ENCODE measurements at regions of chr5 and their contacts with region 1.

Region 1: DNA sequence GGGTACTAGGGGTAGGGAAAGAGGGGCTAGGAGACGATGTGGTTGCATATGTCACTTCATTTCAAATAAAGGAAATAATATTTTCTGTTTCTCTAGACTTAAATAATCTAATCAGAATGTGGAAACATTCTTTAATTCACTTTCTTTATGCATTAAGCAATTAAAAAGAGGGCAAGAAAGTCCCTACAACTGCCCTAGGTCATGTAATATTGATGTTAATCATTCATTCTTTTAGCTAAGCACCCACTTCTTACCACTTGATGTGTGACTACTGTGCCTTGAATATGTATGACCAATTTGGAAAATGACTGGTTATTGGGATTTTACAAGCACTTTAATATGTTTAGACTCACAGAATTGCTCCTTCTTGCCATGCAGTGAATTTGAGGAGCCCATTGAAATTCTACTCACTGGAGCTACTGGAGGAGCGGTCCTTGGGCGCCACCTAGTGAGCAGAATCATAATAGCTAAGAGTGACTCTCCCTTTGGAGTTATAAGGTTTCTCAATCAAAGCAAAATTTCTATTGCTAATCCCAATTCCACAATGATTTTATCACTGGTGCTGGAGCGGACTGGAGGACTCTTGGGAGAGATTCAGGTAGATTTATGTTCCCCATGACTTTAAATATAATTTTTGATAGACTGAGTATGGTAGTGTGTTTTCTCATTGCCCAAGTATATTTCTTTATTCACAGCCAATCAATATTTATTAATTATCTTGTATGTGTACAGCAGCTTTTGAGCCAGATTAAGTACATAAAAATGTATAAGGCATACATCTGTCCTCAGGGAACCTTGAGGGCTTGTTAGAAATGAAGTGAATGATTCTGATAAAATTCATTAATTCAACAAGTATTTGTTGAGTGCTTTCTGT is 225.1 kb downstream of the ADGRV1 start:
- DNase-seq: peak; percentile 25
- ATAC-seq: peak; percentile 92
- H3K4me3 ChIP-seq: no peak overlapping the region
- H3K27ac ChIP-seq: no peak overlapping the region
- H3K4me1 ChIP-seq: no peaks in the 10 kb centered on the region
- H3K27me3 ChIP-seq: no peaks in the 10 kb centered on the region
- CTCF ChIP-seq: peak; percentile 81 to 91 (median 83)
- EP300 ChIP-seq: no peak
- POLR2A ChIP-seq: no peak
- RAD21 ChIP-seq: peak; percentile 97

Region 2: DNA sequence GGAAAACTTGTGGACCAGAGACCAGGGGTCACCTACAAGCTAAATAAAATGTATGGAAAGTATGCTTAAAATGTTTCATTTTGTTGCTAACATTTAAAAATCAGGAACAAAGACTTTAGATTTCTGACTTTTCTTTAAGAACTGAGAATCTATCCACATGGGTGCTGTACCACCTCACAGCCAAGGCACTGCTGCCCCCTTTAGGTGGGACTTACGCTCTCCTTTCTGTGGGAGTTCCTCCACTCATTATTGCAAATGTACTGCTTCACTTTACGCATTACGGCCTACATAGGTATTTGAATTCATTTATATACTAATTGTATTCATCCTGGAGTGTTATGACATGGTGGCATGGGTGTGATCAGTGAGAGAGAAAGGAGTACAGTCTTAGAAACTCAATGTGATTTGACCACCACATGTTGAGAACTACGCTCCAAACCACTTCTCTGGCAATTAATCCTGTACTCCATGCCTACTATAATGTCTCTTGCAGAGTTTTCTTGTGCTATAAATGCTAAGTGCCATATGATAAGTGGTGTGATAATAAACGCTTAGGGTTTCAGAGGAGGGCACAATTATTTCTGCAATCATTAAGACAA is 349.5 kb before region 1 on chr5:
- CTCF ChIA-PET with region 1: interaction called, 38 read pairs
- POLR2A ChIA-PET with region 1: no interaction called
- RAD21 ChIA-PET with region 1: interaction called, 27 read pairs
- SMC1A ChIA-PET with region 1: interaction called, 20 read pairs
- in situ Hi-C with region 1: loop called (anchors 5 kb)
- intact Hi-C with region 1: loop called (anchors 1 kb)
- DNase-seq: no peak
- ATAC-seq: peak; percentile 92
- H3K4me3 ChIP-seq: no peak overlapping the region
- H3K27ac ChIP-seq: no peak overlapping the region
- H3K4me1 ChIP-seq: 0 out of 2 replicates have a peak, but pooled peaks cover 5% of the 10 kb centered on the region
- H3K27me3 ChIP-seq: no peaks in the 10 kb centered on the region
- CTCF ChIP-seq: peak; percentile 65 to 75 (median 68)
- EP300 ChIP-seq: no peak
- POLR2A ChIP-seq: no peak
- RAD21 ChIP-seq: peak; percentile 72

Region 3: GRCh38 chr5:90440644-90441043 is 343.1 kb before region 1 on chr5:
- CTCF ChIA-PET with region 1: interaction called, 38 read pairs
- POLR2A ChIA-PET with region 1: no interaction called
- RAD21 ChIA-PET with region 1: interaction called, 27 read pairs
- SMC1A ChIA-PET with region 1: interaction called, 20 read pairs
- in situ Hi-C with region 1: loop called (anchors 5 kb)
- intact Hi-C with region 1: loop called (anchors 1 kb)
- DNase-seq: no peak
- ATAC-seq: 0 out of 3 replicates have a peak, but pooled peaks have one; percentile 31
- H3K4me3 ChIP-seq: no peak overlapping the region
- H3K27ac ChIP-seq: no peak overlapping the region
- H3K4me1 ChIP-seq: no peaks in the 10 kb centered on the region
- H3K27me3 ChIP-seq: no peaks in the 10 kb centered on the region
- CTCF ChIP-seq: no peak
- EP300 ChIP-seq: no peak
- POLR2A ChIP-seq: no peak
- RAD21 ChIP-seq: no peak

Region 4: DNA sequence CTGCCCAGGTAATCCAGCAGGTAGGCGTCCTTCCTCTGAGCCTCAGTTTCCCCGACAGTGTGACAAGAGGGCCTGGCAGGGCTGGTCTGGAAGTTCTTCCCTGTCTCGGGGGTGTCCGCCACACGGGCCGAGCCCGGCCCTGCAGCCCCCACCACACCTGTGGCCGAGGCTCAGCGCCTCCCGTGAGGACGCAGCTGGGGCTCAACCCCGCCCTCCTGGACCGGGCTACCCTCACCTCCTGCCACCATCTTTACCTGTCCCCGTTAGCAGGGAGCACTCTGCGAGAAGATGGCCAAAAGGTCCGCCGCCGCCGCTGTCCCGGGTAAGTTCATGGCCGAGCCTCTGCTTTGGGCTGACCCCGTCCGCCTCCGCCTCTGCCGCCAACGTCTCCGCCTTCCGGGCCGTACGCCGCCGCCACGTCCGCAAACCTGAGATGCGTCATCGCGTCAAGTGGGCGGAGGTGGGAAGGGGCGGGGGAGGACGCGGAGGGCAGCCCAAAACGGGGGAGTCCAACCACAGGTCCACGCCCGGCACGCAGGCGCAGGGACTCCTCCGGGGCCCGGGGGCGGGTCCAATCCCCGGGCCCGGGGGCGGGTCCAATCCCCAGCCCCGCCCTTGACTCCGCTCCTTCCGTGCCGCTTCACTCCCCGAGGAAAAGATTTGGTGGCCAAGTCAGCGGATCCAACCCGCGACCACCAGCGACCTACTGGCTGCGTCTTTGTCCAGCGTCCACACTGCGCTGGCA is 254.3 kb before region 1 on chr5 and contains the start of gene LYSMD3:
- CTCF ChIA-PET with region 1: interaction called, 9 read pairs
- POLR2A ChIA-PET with region 1: no interaction called
- RAD21 ChIA-PET with region 1: no interaction called
- SMC1A ChIA-PET with region 1: interaction called, 10 read pairs
- in situ Hi-C with region 1: no loop called
- intact Hi-C with region 1: loop called (anchors 5 kb)
- DNase-seq: peak; percentile 89
- ATAC-seq: peak; percentile 95
- H3K4me3 ChIP-seq: peak within 1 kb of the TSS; percentile 76
- H3K27ac ChIP-seq: peak within 1 kb of the TSS; percentile 86
- H3K4me1 ChIP-seq: no peaks in the 10 kb centered on the region
- H3K27me3 ChIP-seq: no peaks in the 10 kb centered on the region
- CTCF ChIP-seq: no peak
- EP300 ChIP-seq: peak in 1 of 2 experiments; percentile 20; a peak in 1 of 4 replicates
- POLR2A ChIP-seq: peak; percentile 97
- RAD21 ChIP-seq: no peak
- polyA plus RNA-seq, gene LYSMD3: 3.9 to 6.0 TPM

Region 5: DNA sequence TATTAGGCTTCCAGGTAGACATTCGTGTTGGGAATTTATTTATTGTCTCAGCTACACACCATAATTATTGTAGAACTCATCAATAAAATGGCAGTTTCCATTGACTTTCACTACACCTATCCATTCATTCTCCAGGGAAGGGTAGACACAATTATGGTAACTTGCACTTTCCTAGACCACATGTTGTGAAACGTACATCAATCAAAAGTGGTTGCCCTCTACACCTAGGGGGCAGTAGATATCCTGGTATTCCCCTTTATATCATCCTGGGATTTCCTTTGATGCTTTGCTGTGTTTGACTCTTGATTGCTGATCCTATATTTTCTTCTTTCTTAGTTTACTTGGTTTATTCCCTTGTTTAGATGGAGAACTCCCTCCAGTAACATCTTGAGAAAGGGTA is 177.2 kb before region 1 on chr5:
- CTCF ChIA-PET with region 1: interaction called, 37 read pairs
- POLR2A ChIA-PET with region 1: no interaction called
- RAD21 ChIA-PET with region 1: interaction called, 7 read pairs
- SMC1A ChIA-PET with region 1: interaction called, 8 read pairs
- in situ Hi-C with region 1: no loop called
- intact Hi-C with region 1: loop called (anchors 1 kb)
- DNase-seq: no peak
- ATAC-seq: peak; percentile 48; the same call in 2 of the 3 replicates
- H3K4me3 ChIP-seq: no peak overlapping the region
- H3K27ac ChIP-seq: no peak overlapping the region
- H3K4me1 ChIP-seq: peaks cover 3% of the 10 kb centered on the region; the same call in 1 of the 2 replicates
- H3K27me3 ChIP-seq: no peaks in the 10 kb centered on the region; a peak in 1 of 4 replicates
- CTCF ChIP-seq: peak; percentile 31 to 41 (median 41); a peak in 4 of 6 replicates
- EP300 ChIP-seq: no peak
- POLR2A ChIP-seq: no peak
- RAD21 ChIP-seq: peak; percentile 44

Region 6: DNA sequence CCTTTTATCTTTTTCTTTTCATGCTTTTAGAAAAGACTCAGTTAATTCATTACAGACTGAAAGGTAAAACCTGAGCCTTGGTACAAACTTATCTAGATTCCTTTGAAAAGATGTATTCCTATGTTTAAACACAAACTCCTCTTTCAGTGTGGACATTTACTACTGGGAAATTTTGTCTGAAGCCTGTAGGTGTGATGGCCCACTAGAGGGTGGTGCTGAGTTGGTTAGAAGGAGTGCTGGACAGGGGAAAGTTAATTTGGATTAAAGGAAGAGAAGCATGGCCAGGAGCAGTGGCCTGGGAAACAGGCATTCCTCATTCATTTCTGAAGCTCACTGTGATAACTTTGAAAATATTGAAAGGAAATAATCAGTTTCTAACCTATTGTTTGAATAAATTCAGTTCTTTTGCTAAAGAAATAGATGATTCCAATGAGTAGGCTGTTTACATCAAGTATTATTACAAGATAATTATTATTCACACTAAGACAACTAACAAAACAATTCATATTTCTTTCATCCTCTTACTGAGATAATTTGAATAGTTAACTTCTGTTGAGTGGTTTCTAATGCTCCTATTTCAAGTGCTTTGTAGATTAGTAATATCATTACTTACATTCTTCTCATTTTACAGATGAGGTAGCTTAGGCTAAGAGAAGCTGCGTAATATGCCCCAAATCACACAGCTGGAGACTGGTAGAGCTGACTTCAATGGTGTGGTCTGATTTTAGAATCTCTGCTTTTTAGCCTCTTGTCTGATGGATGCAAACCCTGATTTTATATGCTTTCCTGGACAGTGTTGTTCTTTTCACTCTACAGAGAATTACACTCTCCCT is 74.2 kb before region 1 on chr5:
- CTCF ChIA-PET with region 1: interaction called, 35 read pairs
- POLR2A ChIA-PET with region 1: no interaction called
- RAD21 ChIA-PET with region 1: interaction called, 3 read pairs
- SMC1A ChIA-PET with region 1: interaction called, 11 read pairs
- in situ Hi-C with region 1: no loop called
- intact Hi-C with region 1: loop called (anchors 1 kb)
- DNase-seq: no peak
- ATAC-seq: peak; percentile 89
- H3K4me3 ChIP-seq: no peak overlapping the region
- H3K27ac ChIP-seq: no peak overlapping the region
- H3K4me1 ChIP-seq: no peaks in the 10 kb centered on the region
- H3K27me3 ChIP-seq: no peaks in the 10 kb centered on the region
- CTCF ChIP-seq: peak; percentile 61 to 82 (median 75)
- EP300 ChIP-seq: no peak
- POLR2A ChIP-seq: no peak
- RAD21 ChIP-seq: peak; percentile 59

Region 7: DNA sequence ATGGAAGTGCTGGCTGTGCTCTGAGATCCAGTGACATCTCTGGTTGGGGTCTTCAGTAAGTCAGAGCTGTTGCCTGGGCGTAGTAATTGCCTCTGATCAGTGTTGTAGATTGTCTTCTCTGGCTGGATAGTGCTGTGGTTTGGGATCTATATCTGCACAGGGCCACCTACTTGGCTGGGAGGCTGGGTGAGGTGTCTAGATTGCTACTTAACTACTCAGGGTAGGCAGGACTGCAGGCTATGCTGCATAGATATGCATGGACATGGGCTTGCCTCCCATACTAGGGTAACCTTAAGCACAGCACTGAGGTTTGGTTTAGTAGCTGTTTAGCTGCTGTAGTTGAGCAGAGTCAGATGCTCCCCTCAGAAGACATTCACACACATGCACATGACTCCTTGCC is 44.1 kb before region 1 on chr5:
- CTCF ChIA-PET with region 1: no interaction called
- POLR2A ChIA-PET with region 1: no interaction called
- RAD21 ChIA-PET with region 1: no interaction called
- SMC1A ChIA-PET with region 1: no interaction called
- in situ Hi-C with region 1: no loop called
- intact Hi-C with region 1: no loop called
- DNase-seq: no peak
- ATAC-seq: no peak
- H3K4me3 ChIP-seq: no peak overlapping the region
- H3K27ac ChIP-seq: no peak overlapping the region
- H3K4me1 ChIP-seq: no peaks in the 10 kb centered on the region
- H3K27me3 ChIP-seq: no peaks in the 10 kb centered on the region
- CTCF ChIP-seq: no peak
- EP300 ChIP-seq: no peak
- POLR2A ChIP-seq: no peak
- RAD21 ChIP-seq: no peak

Region 8: GRCh38 chr5:90802474-90803317 is 19.0 kb after region 1 on chr5:
- CTCF ChIA-PET with region 1: interaction called, 13 read pairs
- POLR2A ChIA-PET with region 1: no interaction called
- RAD21 ChIA-PET with region 1: no interaction called
- SMC1A ChIA-PET with region 1: interaction called, 5 read pairs
- in situ Hi-C with region 1: no loop called
- intact Hi-C with region 1: no loop called
- DNase-seq: no peak
- ATAC-seq: peak; percentile 85
- H3K4me3 ChIP-seq: no peak overlapping the region
- H3K27ac ChIP-seq: no peak overlapping the region
- H3K4me1 ChIP-seq: no peaks in the 10 kb centered on the region
- H3K27me3 ChIP-seq: no peaks in the 10 kb centered on the region
- CTCF ChIP-seq: peak; percentile 62 to 75 (median 74)
- EP300 ChIP-seq: no peak
- POLR2A ChIP-seq: no peak
- RAD21 ChIP-seq: peak; percentile 53

Region 9: GRCh38 chr5:90898330-90899013 is 114.8 kb after region 1 on chr5:
- CTCF ChIA-PET with region 1: no interaction called
- POLR2A ChIA-PET with region 1: no interaction called
- RAD21 ChIA-PET with region 1: no interaction called
- SMC1A ChIA-PET with region 1: no interaction called
- in situ Hi-C with region 1: no loop called
- intact Hi-C with region 1: no loop called
- DNase-seq: no peak
- ATAC-seq: no peak
- H3K4me3 ChIP-seq: no peak overlapping the region
- H3K27ac ChIP-seq: no peak overlapping the region
- H3K4me1 ChIP-seq: no peaks in the 10 kb centered on the region
- H3K27me3 ChIP-seq: no peaks in the 10 kb centered on the region; a peak in 1 of 4 replicates
- CTCF ChIP-seq: no peak
- EP300 ChIP-seq: no peak
- POLR2A ChIP-seq: no peak
- RAD21 ChIP-seq: no peak

Measured in GM12878 (cell line).